ENCODE measurements at regions of chr10 and their contacts with region 1.

Region 1: DNA sequence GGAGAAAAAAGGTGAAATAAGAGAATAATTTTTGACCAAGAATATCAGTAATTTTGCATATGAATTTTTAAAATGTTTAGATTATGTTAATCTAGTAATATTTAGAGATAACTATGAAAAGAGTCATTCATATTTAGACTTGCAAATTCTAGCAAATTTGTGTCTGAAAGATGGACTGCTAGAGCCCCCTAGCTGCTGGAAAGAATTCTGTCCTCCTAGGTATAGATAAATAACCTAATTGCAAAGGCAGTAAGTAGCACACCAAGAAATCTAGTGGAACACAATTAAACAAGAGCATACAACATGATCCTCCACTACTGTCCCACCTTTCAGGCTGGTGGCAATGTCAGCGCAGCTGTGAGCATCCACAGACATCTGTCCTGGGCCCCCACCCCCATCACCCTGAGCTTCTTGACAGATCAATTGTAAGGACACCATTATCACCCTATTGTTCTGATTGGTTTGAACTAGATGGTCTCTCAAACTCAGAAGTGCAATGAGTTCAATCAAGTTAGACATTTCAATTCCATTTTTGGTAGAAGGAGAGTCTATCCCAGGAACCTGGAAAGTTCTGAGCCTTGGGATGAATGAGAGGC is 15.0 kb upstream of the GFRA1 start:
- DNase-seq: peak; percentile 74
- H3K4me3 ChIP-seq: no peak overlapping the region
- H3K27ac ChIP-seq: no peak overlapping the region
- H3K4me1 ChIP-seq: no peaks in the 10 kb centered on the region
- H3K27me3 ChIP-seq: no peaks in the 10 kb centered on the region

Region 2: DNA sequence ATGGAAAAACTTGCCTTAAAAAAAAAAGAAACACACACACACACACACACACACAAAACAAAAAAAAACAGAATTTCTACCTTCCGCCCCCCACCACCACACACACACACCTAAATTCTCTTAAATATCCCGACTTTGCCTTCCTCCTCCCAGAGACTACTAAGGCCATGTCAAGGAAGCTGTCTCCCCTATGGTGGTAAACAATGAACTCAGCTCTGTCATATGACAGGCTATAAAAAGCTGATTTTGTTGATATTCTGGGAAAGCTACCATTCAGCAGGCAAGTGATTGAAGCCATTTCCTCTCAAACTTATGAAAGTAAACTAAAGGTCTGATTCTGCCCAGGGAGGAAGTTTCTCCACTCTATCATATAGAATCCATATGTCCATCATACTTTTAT is 486.0 kb before region 1 on chr10:
- in situ Hi-C with region 1: loop called (anchors 10 kb)
- DNase-seq: no peak
- H3K4me3 ChIP-seq: no peak overlapping the region
- H3K27ac ChIP-seq: no peak overlapping the region
- H3K4me1 ChIP-seq: no peaks in the 10 kb centered on the region
- H3K27me3 ChIP-seq: no peaks in the 10 kb centered on the region; the same call in 1 of the 2 replicates